ENCODE measurements at regions of chr13 and their contacts with region 1.

Region 1: GRCh38 chr13:42110410-42111155 is 62.1 kb downstream of the DGKH start:
- DNase-seq: no peak
- ATAC-seq: no peak

Region 2: DNA sequence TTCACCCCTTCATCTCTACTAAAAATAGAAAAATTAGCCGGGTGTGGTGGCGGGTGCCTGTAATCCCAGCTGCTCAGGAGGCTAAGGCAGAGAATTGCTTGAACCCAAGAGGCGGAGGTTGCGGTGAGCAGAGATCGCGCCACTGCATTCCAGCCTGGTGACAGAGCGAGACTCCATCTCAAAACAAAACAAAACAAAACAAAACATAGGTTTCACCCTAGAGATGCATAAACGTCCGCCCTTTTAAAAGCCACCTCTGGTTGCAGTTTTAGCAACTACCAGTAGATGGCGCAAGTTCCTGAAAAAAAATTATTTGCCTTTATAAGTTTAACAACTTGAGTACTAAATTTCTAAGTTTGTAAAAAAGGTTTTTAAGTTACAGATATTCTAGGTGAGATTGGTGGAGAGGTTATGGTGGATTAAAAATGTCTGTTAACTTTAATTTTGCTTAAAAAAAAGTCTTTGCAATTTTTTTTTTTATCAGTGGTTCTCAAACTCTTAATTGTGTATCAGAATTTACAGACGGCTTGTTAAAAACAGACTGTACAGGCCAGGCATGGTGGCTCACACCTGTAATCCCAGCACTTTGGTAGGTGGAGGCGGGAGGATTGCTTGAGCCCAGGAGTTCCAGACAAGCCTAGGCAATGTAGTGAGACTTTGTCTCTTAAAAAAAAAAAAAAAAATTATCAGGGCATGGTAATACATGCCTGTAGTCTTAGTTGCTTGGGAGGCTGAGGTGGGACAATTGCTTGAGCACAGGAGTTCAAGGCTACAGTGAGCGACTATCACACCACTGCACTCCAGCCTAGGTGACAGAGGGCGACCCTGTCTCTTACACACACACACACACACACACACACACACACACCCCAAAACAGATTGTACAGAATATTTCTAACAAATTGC is 757.4 kb before region 1 on chr13:
- intact Hi-C with region 1: loop called (anchors 5 kb)
- DNase-seq: no peak
- ATAC-seq: no peak

Region 3: DNA sequence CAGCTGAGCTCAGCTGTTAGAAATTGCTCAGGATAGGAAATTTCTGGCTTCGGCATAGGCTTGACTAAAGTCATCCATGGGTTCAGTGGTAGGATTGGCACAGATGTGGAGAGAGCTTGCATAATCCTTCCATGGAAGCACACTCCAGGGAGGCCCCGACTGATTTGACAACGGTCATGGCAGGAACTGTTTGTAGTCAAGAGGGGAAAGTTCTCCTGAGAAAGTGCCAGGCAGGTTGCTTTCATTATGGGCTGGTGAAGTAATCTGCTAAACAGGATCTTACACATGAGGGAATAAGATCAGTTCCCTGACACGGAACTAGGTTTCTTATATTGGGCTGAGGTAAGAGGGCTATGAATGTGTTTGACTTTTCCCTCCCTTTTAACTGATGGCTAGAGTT is 533.1 kb before region 1 on chr13:
- intact Hi-C with region 1: no loop called
- DNase-seq: no peak
- ATAC-seq: peak; percentile 95

Region 4: GRCh38 chr13:41668130-41668757 is 442.3 kb before region 1 on chr13:
- intact Hi-C with region 1: loop called (anchors 1 kb)
- DNase-seq: no peak
- ATAC-seq: peak; percentile 92

Region 5: GRCh38 chr13:41746259-41746658 is 364.3 kb before region 1 on chr13:
- intact Hi-C with region 1: no loop called
- DNase-seq: no peak
- ATAC-seq: no peak

Region 6: GRCh38 chr13:41985788-41986508 is 124.6 kb before region 1 on chr13:
- intact Hi-C with region 1: no loop called
- DNase-seq: no peak
- ATAC-seq: no peak

Region 7: GRCh38 chr13:42153199-42154113 is 42.9 kb after region 1 on chr13:
- intact Hi-C with region 1: no loop called
- DNase-seq: no peak
- ATAC-seq: no peak

Measured in Right ventricle myocardium inferior (tissue), 1 donor.